ENCODE measurements at regions of chr11 and their contacts with region 1.

Region 1: DNA sequence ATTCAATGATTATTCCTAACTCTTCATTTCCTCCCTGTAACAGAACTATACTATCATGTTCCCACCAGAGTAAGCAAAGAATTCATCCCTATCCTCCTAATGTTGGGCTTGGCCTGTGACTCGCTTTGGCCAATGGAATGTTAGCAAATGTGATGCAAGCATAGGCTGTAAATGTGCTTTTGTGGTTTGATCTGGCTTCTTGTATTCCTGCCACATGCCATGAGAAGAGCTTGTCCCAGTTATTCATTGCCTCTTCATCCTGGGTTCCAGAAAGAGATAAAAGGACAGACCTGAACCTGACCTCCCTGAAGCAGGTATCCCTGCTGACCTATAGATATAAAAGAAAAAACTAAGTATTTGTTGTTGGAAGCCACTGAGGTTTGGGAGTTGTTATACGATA is 51.0 kb downstream of the SYTL2 start:
- DNase-seq: no peak
- H3K4me3 Mint-ChIP-seq: no peak overlapping the region
- H3K27ac Mint-ChIP-seq: peak overlapping the region; percentile 7
- H3K4me1 Mint-ChIP-seq: peaks cover 90% of the 10 kb centered on the region
- H3K27me3 Mint-ChIP-seq: no peaks in the 10 kb centered on the region

Region 2: DNA sequence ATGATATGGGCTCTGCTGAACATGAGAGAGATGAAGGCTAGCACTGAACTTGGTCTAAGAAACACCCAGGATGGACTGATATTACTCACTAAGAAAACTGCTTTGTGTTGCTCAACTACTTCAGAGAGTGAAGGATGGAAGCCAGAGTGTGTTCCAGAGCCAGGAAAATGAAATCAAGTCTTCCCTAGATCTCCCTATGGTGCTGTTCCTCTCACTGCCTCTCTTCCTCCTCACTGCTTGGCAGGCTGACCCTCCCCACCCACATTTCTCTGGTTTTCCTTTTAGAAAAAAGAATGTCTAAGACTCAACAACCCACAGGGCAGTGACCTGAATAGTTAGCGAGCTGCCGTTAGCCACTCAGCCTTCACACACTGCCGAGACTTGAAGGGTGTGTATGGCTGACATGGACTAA is 680.4 kb after region 1 on chr11:
- intact Hi-C with region 1: loop called (anchors 10 kb)
- DNase-seq: no peak
- H3K4me3 Mint-ChIP-seq: no peak overlapping the region
- H3K27ac Mint-ChIP-seq: peak overlapping the region; percentile 71
- H3K4me1 Mint-ChIP-seq: peaks cover 57% of the 10 kb centered on the region
- H3K27me3 Mint-ChIP-seq: no peaks in the 10 kb centered on the region

Region 3: DNA sequence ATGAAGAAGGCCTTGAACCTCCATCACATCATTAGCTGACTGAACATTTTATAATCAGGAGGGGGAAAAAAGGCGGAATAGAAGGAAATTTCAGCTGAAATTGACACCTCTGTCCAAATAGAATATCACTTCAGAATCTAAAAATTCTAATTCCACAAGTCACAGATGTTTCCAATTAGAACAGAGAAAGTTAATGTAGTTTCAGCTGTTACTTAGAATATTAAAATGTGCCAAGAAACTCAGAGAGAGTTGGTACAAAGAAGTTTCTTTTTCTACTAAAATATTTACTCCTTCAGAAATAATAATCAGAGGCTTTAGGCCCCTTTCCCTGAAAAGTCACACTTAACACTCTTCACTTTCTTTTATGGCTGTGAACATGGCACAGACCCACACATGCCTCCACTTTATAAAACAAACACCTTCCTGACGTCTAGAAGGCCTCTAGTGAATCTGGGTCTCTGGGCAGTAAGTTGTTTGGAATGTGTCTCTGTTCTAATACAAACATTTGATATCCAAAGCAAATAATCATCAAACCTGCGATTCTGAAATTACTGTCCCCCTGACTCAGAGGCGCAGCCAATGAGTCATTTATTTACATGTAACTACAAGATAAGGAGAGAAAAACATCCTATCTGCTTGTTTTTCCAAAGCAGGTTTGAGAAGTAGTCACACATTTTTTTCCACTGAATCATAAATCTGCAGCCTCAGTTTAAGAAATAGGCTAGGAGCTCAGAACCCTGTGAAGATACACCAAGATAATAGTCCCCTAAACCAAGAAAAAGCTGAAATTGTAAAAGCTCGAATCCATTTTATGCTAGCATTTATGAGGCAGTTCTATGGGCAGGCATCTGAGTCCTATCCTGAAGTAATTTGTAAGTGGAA is 764.1 kb after region 1 on chr11:
- intact Hi-C with region 1: loop called (anchors 5 kb)
- DNase-seq: no peak
- H3K4me3 Mint-ChIP-seq: peak overlapping the region; percentile 56
- H3K27ac Mint-ChIP-seq: peak overlapping the region; percentile 90
- H3K4me1 Mint-ChIP-seq: peaks cover 36% of the 10 kb centered on the region
- H3K27me3 Mint-ChIP-seq: peaks cover 2% of the 10 kb centered on the region